ENCODE measurements at regions of chr3 and their contacts with region 1.

Region 1: DNA sequence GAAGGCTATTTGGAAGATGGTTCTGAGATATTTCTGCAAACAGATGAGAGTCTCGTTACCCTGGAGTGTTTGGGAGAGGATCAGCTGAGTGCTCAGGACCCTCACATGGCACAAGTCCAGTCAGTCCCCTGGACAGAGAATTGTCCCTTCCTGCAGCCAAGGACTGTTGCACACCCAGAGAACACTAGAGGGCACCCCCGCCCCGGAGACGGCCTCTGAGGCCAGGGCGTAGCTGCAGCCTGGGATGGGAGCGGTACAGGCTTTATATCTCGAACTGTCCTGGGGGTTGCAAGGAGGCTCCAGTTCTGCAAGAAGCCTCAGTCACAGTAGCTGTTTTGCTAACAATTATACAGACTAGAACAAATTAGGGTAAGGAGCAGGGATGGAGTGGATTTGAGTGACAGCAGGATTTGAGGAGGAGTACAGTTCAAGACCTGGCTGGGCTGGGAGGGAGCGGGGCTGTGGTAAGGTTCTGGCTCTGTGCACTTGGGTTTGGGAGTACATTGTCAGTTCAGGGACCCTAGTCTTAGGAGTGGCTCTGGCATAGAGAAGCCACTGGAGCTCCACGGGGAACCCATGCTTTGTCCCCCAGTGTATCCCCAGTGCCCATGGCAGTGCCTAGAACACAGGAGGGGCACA is 67.6 kb upstream of the HACD2 start:
- DNase-seq: peak; percentile 35 to 52 (median 42)
- H3K4me3 ChIP-seq: no peak overlapping the region
- H3K4me3 Mint-ChIP-seq: no peak overlapping the region
- H3K27ac ChIP-seq: no peak overlapping the region
- H3K27ac Mint-ChIP-seq: peak overlapping the region in 1 of 7 donors; percentile 75
- H3K4me1 ChIP-seq: peaks cover 0 to 4% of the 10 kb centered on the region in 2 donors
- H3K4me1 Mint-ChIP-seq: peaks cover 13% of the 10 kb centered on the region
- H3K27me3 ChIP-seq: no peaks in the 10 kb centered on the region
- H3K27me3 Mint-ChIP-seq: peaks cover 1 to 5% (median 2%) of the 10 kb centered on the region in 3 donors
- CTCF ChIP-seq: peak; percentile 82

Region 2: DNA sequence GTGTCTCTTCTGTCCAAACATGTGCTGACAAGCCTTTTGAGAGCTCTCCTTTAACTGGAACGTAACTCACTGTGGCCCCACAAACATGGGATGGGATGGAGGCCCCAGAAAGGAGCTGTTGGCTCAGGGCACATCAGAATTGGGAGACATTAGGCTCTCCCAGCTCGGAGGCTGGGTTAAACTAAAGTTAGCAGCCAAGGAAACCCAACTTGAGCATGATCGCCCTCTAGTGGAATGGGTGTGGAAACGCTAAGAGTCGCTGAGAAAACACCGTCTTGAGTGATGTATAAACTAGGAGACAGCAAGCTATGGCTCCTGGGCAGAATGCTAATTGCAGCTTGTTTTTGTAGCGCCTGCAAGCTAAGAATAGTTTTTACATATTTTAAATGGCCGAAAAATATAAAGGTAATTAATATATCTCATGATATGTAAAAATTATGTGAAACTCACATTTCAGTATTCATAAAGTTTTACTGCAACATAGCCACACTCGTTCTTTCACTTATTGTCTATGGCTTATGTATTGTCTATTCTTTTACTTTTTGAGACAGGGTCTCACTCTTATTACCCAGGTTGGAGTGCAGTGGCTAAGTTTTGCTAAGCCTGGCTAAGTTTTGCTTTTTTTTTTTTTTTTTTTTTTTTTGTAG is 71.2 kb after region 1 on chr3:
- intact Hi-C with region 1: loop called (anchors 5 kb)
- DNase-seq: peak; percentile 33 to 57 (median 53)
- H3K4me3 ChIP-seq: no peak overlapping the region
- H3K4me3 Mint-ChIP-seq: no peak overlapping the region
- H3K27ac ChIP-seq: no peak overlapping the region
- H3K27ac Mint-ChIP-seq: no peak overlapping the region
- H3K4me1 ChIP-seq: no peaks in the 10 kb centered on the region
- H3K4me1 Mint-ChIP-seq: peaks cover 12% of the 10 kb centered on the region
- H3K27me3 ChIP-seq: no peaks in the 10 kb centered on the region
- H3K27me3 Mint-ChIP-seq: peaks cover 4 to 5% (median 5%) of the 10 kb centered on the region in 3 donors
- CTCF ChIP-seq: peak; percentile 85